ENCODE measurements at regions of chr12 and their contacts with region 1.

Region 1: GRCh38 chr12:124680863-124681778 is 113.7 kb upstream of the NCOR2 start:
- DNase-seq: peak; percentile 94
- H3K4me3 ChIP-seq: no peak overlapping the region
- H3K27ac ChIP-seq: peak overlapping the region; percentile 98
- H3K4me1 ChIP-seq: peaks cover 41% of the 10 kb centered on the region
- H3K27me3 ChIP-seq: no peaks in the 10 kb centered on the region
- CTCF ChIP-seq: peak; percentile 28 to 39
- POLR2A ChIP-seq: peak; percentile 54

Region 2: GRCh38 chr12:124466216-124467128 is 214.6 kb before region 1 on chr12:
- CTCF ChIA-PET with region 1: interaction called, 3 read pairs
- POLR2A ChIA-PET with region 1: no interaction called
- dilution Hi-C with region 1: no loop called
- intact Hi-C with region 1: loop called (anchors 2 kb)
- DNase-seq: peak; percentile 64
- H3K4me3 ChIP-seq: no peak overlapping the region
- H3K27ac ChIP-seq: peak overlapping the region; percentile 71
- H3K4me1 ChIP-seq: peaks cover 12% of the 10 kb centered on the region
- H3K27me3 ChIP-seq: no peaks in the 10 kb centered on the region
- CTCF ChIP-seq: peak in 1 of 2 donors; percentile 17
- POLR2A ChIP-seq: no peak

Region 3: DNA sequence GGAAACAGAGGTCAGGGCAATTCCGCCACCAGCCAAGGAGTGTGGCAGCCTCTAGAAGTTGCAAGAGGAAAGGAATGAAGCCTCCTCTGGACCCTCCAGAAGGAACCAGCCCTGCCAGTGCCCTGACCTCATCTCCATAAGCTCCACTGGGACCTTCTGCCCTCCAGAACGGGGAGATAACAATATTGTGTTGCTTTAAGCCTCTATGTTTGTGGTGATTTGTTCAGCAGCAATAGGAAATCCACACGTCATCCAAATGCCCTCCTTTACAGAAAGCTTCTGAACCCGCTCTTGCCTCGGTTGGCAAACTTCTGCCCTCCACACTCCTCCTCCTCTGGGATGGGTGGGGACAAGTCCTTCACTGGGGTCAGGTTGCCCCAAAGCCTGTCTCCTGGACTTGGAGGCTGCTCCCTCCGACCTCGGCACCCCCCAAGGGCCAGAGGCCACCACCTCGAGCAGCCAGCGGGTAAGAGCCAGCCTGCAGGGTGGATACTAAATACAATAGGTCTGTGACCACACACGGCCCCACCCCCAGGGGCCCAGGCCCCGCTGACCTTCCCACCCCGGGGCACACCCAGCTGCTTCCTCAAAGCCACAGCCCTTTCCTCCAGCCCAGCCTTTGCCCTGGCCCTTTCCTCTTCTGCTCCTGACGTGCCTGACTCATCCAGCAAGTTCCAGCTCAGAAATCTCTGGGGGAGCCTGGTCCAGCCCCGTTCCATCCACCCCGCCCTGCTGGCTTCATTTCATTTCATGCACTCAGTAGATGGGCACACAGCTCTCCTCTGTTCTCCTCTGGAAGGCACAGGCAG is 55.0 kb before region 1 on chr12:
- CTCF ChIA-PET with region 1: interaction called, 6 read pairs
- POLR2A ChIA-PET with region 1: interaction called, 3 read pairs
- dilution Hi-C with region 1: no loop called
- intact Hi-C with region 1: loop called (anchors 1 kb)
- DNase-seq: peak; percentile 91
- H3K4me3 ChIP-seq: no peak overlapping the region
- H3K27ac ChIP-seq: peak overlapping the region; percentile 91
- H3K4me1 ChIP-seq: peaks cover 26% of the 10 kb centered on the region
- H3K27me3 ChIP-seq: no peaks in the 10 kb centered on the region
- CTCF ChIP-seq: no peak
- POLR2A ChIP-seq: peak; percentile 51

Region 4: GRCh38 chr12:124713436-124714082 is 32.4 kb after region 1 on chr12:
- CTCF ChIA-PET with region 1: interaction called, 4 read pairs
- POLR2A ChIA-PET with region 1: no interaction called
- dilution Hi-C with region 1: no loop called
- intact Hi-C with region 1: loop called (anchors 1 kb)
- DNase-seq: peak; percentile 96
- H3K4me3 ChIP-seq: peak overlapping the region in 1 of 3 experiments; percentile 9
- H3K27ac ChIP-seq: peak overlapping the region; percentile 94
- H3K4me1 ChIP-seq: peaks cover 24% of the 10 kb centered on the region
- H3K27me3 ChIP-seq: no peaks in the 10 kb centered on the region
- CTCF ChIP-seq: no peak
- POLR2A ChIP-seq: peak; percentile 35

Region 5: GRCh38 chr12:124734224-124734788 is 53.2 kb after region 1 on chr12:
- CTCF ChIA-PET with region 1: no interaction called
- POLR2A ChIA-PET with region 1: no interaction called
- dilution Hi-C with region 1: loop called (anchors 10 kb)
- intact Hi-C with region 1: no loop called
- DNase-seq: no peak
- H3K4me3 ChIP-seq: no peak overlapping the region
- H3K27ac ChIP-seq: no peak overlapping the region
- H3K4me1 ChIP-seq: peaks cover 19% of the 10 kb centered on the region
- H3K27me3 ChIP-seq: no peaks in the 10 kb centered on the region
- CTCF ChIP-seq: no peak
- POLR2A ChIP-seq: no peak